CD4-positive, alpha-beta T cell (primary cell): ENCODE measurements at regions of chr1 and their contacts with region 1.

Region 1: GRCh38 chr1:56709269-56709880 is 64.3 kb downstream of the PRKAA2 start:
- DNase-seq: peak in 4 of 14 experiments; percentile 3 to 39 (median 33)
- ATAC-seq: peak; percentile 32
- H3K4me3 ChIP-seq: no peak overlapping the region
- H3K4me3 Mint-ChIP-seq: no peak overlapping the region
- H3K27ac ChIP-seq: no peak overlapping the region
- H3K27ac Mint-ChIP-seq: no peak overlapping the region
- H3K4me1 ChIP-seq: no peaks in the 10 kb centered on the region
- H3K4me1 Mint-ChIP-seq: no peaks in the 10 kb centered on the region
- H3K27me3 ChIP-seq: no peaks in the 10 kb centered on the region
- H3K27me3 Mint-ChIP-seq: peaks cover 31% of the 10 kb centered on the region
- CTCF ChIP-seq: peak; percentile 74

Region 2: GRCh38 chr1:55131801-55132200 is 1577.6 kb before region 1 on chr1:
- CTCF ChIA-PET with region 1: no interaction called
- POLR2A ChIA-PET with region 1: no interaction called
- intact Hi-C with region 1: loop called in 1 of 2 experiments (anchors 10 kb)
- DNase-seq: no peak
- ATAC-seq: no peak
- H3K4me3 ChIP-seq: no peak overlapping the region
- H3K4me3 Mint-ChIP-seq: no peak overlapping the region
- H3K27ac ChIP-seq: no peak overlapping the region
- H3K27ac Mint-ChIP-seq: peak overlapping the region; percentile 18
- H3K4me1 ChIP-seq: no peaks in the 10 kb centered on the region
- H3K4me1 Mint-ChIP-seq: no peaks in the 10 kb centered on the region
- H3K27me3 ChIP-seq: no peaks in the 10 kb centered on the region
- H3K27me3 Mint-ChIP-seq: no peaks in the 10 kb centered on the region
- CTCF ChIP-seq: no peak

Region 3: GRCh38 chr1:55140546-55140983 is 1568.8 kb before region 1 on chr1:
- CTCF ChIA-PET with region 1: no interaction called
- POLR2A ChIA-PET with region 1: no interaction called
- intact Hi-C with region 1: loop called (anchors 5 to 10 kb)
- DNase-seq: peak; percentile 26 to 90 (median 58)
- ATAC-seq: peak; percentile 94
- H3K4me3 ChIP-seq: no peak overlapping the region
- H3K4me3 Mint-ChIP-seq: no peak overlapping the region
- H3K27ac ChIP-seq: peak overlapping the region in 1 of 2 donors; percentile 7
- H3K27ac Mint-ChIP-seq: peak overlapping the region; percentile 70
- H3K4me1 ChIP-seq: no peaks in the 10 kb centered on the region
- H3K4me1 Mint-ChIP-seq: peaks cover 10% of the 10 kb centered on the region
- H3K27me3 ChIP-seq: no peaks in the 10 kb centered on the region
- H3K27me3 Mint-ChIP-seq: no peaks in the 10 kb centered on the region
- CTCF ChIP-seq: peak; percentile 88

Region 4: DNA sequence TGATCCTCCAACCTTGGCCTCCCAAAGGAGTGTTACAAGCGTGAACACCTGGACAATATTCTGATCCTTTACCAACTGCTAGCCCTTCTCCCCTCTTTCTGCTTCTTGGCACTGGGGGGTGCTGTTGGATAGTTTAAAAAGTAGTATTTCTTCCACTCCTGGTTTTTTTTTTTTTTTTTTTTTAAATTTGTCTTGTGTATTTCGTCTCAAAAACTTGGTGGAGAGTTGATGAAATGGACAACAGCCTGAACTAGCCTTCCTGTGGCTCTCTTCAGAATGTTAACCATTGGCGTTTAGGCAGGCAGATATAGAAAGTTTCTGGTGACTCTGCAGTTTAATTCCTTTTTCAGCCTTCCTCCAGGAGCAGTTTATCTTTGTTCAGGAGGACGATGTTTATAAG is 1424.5 kb before region 1 on chr1:
- CTCF ChIA-PET with region 1: no interaction called
- POLR2A ChIA-PET with region 1: no interaction called
- intact Hi-C with region 1: loop called (anchors 5 kb)
- DNase-seq: peak in 3 of 14 experiments; percentile 19 to 37 (median 35)
- ATAC-seq: no peak
- H3K4me3 ChIP-seq: no peak overlapping the region
- H3K4me3 Mint-ChIP-seq: no peak overlapping the region
- H3K27ac ChIP-seq: no peak overlapping the region
- H3K27ac Mint-ChIP-seq: no peak overlapping the region
- H3K4me1 ChIP-seq: peaks cover 6% of the 10 kb centered on the region
- H3K4me1 Mint-ChIP-seq: no peaks in the 10 kb centered on the region
- H3K27me3 ChIP-seq: no peaks in the 10 kb centered on the region
- H3K27me3 Mint-ChIP-seq: peaks cover 4% of the 10 kb centered on the region
- CTCF ChIP-seq: no peak

Region 5: GRCh38 chr1:55478742-55479141 is 1230.6 kb before region 1 on chr1:
- CTCF ChIA-PET with region 1: no interaction called
- POLR2A ChIA-PET with region 1: no interaction called
- intact Hi-C with region 1: no loop called
- DNase-seq: no peak
- ATAC-seq: no peak
- H3K4me3 ChIP-seq: no peak overlapping the region
- H3K4me3 Mint-ChIP-seq: no peak overlapping the region
- H3K27ac ChIP-seq: no peak overlapping the region
- H3K27ac Mint-ChIP-seq: no peak overlapping the region
- H3K4me1 ChIP-seq: no peaks in the 10 kb centered on the region
- H3K4me1 Mint-ChIP-seq: no peaks in the 10 kb centered on the region
- H3K27me3 ChIP-seq: peaks cover 5 to 7% of the 10 kb centered on the region in 2 experiments
- H3K27me3 Mint-ChIP-seq: peaks cover 16% of the 10 kb centered on the region
- CTCF ChIP-seq: no peak